ENCODE measurements at regions of chr1 and their contacts with region 1.

Region 1: DNA sequence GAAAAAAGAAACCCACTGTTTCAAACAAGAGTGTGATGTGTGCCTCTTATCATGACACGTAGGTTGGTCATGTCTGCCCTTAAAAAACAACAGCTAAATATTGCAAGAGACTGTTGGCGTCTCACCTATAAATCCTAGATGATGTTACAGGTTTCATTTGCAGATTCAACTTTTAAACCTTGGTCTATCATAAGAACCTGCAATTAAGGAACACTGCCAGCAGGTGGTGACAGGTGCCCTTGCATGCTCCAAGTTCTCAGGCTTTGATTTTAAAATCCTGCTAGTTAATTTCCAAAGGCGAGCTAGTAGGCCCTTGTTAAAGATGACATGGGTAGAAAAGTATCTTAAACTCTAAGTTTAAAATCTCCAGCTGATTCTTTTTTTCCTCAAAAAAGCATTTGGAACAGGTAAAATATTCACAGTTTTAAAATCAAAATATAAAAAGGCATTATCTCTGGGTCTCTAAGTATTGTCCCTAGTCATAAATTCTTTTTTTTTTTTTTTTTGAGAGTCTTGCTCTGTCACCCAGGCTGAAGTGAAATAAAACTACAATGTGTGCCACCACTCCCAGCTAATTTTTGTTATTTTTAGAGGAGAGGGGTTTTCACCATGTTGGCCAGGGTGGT is 39.1 kb downstream of the CLSTN1 start:
- DNase-seq: peak; percentile 72
- CTCF ChIP-seq: peak; percentile 78

Region 2: DNA sequence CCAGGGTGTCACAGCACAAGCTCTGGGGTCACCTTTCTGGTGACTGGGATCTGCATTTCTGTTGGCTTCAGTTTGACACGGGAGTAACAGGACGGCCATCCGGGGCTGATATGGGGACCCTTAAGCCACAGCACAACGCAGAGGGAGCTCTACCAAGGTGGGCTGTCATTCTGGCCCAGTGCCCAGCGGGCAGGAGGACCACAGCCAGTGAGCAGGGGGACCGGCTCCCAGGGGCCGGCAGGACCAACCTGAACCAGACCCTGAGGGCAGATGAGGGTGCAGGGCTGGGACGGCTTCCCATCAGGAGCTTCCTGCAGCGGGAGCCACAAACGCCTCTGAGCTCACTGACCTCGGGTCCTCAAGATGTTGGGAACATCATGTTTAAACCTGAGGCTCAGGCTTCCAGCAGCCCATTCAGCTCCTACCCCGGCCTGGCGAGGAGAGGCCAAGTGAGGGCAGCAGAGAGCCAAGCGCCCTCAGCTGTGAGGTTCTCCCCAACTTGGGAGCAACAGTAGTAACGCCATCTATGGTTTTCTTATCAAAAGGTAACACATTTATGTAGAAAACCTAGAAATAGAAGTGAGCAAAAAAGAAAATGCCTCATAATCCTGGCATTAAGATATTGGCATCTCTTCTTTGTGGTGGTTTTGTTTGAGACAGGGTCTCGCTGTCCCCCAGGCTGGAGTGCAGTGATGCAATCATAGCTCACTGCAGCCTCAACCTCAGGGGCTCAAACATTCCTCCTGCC is 169.1 kb before region 1 on chr1:
- CTCF ChIA-PET with region 1: interaction called, 13 read pairs
- POLR2A ChIA-PET with region 1: no interaction called
- DNase-seq: peak; percentile 83
- CTCF ChIP-seq: peak; percentile 86

Region 3: GRCh38 chr1:9724706-9725476 is 59.7 kb before region 1 on chr1:
- CTCF ChIA-PET with region 1: no interaction called
- POLR2A ChIA-PET with region 1: no interaction called
- DNase-seq: peak; percentile 86
- CTCF ChIP-seq: peak; percentile 98

Region 4: DNA sequence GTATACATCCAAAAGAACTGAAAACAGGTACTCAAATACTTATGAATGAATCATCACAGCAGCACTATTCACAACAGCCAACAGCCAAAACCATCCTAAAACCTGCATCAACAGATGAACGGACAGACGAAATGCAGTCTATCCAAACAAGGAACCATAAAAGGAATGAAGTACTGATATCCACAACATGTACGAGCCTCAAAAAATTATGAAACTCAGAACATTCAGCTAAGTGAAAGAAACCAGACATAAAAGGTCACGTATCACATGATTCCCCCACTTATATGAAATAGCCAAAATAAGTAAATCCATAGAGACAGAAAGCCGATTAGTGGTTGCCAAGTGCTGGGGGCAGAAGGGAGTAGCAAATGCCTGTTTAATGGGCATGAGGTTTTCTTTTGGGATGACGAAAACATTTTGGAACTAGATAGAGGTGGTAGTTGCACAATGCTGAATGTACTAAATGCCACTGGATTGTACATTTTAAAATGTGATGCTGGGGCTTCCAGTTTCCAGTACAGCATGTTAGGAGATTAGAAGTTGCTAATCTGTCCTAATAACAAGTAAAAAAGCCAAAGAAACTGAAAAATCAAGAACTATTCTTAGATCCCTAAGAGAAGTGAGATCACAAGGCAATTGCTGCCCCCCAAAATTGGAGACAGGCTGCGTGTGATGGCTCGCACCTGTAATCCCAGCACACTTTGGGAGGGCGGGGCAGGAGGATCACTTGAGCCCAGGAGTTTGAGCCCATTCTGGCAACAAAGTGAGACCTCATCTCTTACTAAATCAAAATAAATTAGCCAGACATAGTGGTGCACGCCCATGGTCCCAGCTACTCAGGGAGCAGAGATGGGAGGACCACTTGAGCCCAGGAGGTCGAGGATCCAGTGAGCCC is 13.9 kb after region 1 on chr1:
- CTCF ChIA-PET with region 1: interaction called, 24 read pairs
- POLR2A ChIA-PET with region 1: no interaction called
- DNase-seq: no peak
- CTCF ChIP-seq: no peak

Region 5: GRCh38 chr1:9816199-9816598 is 31.6 kb after region 1 on chr1:
- CTCF ChIA-PET with region 1: interaction called, 14 read pairs
- POLR2A ChIA-PET with region 1: no interaction called
- DNase-seq: no peak
- CTCF ChIP-seq: no peak

Region 6: GRCh38 chr1:9867408-9868243 is 83.0 kb after region 1 on chr1:
- CTCF ChIA-PET with region 1: interaction called, 72 read pairs
- POLR2A ChIA-PET with region 1: no interaction called
- DNase-seq: peak; percentile 91
- CTCF ChIP-seq: peak; percentile 99